ENCODE measurements at regions of chr1 and their contacts with region 1.

Region 1: DNA sequence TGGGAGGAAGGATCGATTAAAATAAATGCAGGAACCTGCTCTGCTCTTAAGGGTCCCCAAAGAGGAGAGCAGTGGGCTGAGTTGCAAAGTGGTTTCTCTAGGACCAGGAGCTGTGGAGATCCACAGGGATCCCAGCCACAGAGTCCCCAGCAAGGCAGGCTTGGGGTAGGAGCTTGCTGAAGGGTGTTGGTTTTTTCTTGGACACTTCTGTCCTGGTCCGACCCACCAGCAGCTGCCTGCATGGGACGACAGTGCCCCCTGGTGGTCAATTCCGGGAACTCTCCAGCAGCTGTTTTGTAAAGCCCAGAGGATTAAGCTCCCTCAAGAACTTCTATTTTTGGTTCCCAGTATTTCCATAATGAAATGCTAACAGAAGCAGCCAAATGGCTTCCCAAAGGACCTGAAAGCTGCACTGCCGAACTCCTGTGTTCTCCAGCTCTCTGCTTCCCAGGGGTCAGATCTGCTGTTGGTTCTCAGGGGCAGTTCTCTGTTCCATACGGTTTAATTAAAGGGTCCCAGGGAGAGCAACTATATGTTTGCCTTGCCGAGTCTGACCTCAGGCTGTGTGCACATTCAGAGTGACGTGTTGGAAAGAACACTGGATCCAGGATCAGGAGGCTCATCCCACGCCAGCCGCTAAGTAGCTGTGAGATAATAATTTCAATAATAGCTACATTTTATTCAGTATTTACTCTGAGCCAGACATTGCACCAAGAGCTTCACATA is 23.2 kb downstream of the NENF start:
- DNase-seq: peak; percentile 58
- ATAC-seq: peak; percentile 87
- H3K4me3 ChIP-seq: no peak overlapping the region
- H3K27ac ChIP-seq: no peak overlapping the region
- H3K4me1 ChIP-seq: peaks cover 12% of the 10 kb centered on the region; the same call in 1 of the 2 replicates
- H3K27me3 ChIP-seq: no peaks in the 10 kb centered on the region
- CTCF ChIP-seq: peak; percentile 91
- EP300 ChIP-seq: no peak
- POLR2A ChIP-seq: no peak
- RAD21 ChIP-seq: peak; percentile 86

Region 2: GRCh38 chr1:211965108-211965805 is 490.7 kb before region 1 on chr1:
- CTCF ChIA-PET with region 1: no interaction called
- POLR2A ChIA-PET with region 1: no interaction called
- in situ Hi-C with region 1: no loop called
- intact Hi-C with region 1: no loop called
- DNase-seq: no peak
- ATAC-seq: no peak
- H3K4me3 ChIP-seq: no peak overlapping the region
- H3K27ac ChIP-seq: no peak overlapping the region
- H3K4me1 ChIP-seq: no peaks in the 10 kb centered on the region
- H3K27me3 ChIP-seq: no peaks in the 10 kb centered on the region
- CTCF ChIP-seq: no peak
- EP300 ChIP-seq: no peak
- POLR2A ChIP-seq: no peak
- RAD21 ChIP-seq: no peak

Region 3: GRCh38 chr1:212062832-212063438 is 393.0 kb before region 1 on chr1:
- CTCF ChIA-PET with region 1: interaction called, 12 read pairs
- POLR2A ChIA-PET with region 1: no interaction called
- in situ Hi-C with region 1: loop called (anchors 5 kb)
- intact Hi-C with region 1: loop called (anchors 2 kb)
- DNase-seq: peak; percentile 47
- ATAC-seq: peak; percentile 74
- H3K4me3 ChIP-seq: no peak overlapping the region
- H3K27ac ChIP-seq: no peak overlapping the region
- H3K4me1 ChIP-seq: no peaks in the 10 kb centered on the region
- H3K27me3 ChIP-seq: no peaks in the 10 kb centered on the region
- CTCF ChIP-seq: peak; percentile 68
- EP300 ChIP-seq: no peak
- POLR2A ChIP-seq: no peak
- RAD21 ChIP-seq: peak; percentile 36; the same call in 1 of the 2 replicates

Region 4: GRCh38 chr1:212070720-212071302 is 385.2 kb before region 1 on chr1:
- CTCF ChIA-PET with region 1: interaction called, 13 read pairs
- POLR2A ChIA-PET with region 1: no interaction called
- in situ Hi-C with region 1: no loop called
- intact Hi-C with region 1: no loop called
- DNase-seq: peak; percentile 35
- ATAC-seq: peak; percentile 69
- H3K4me3 ChIP-seq: no peak overlapping the region
- H3K27ac ChIP-seq: no peak overlapping the region
- H3K4me1 ChIP-seq: no peaks in the 10 kb centered on the region
- H3K27me3 ChIP-seq: no peaks in the 10 kb centered on the region
- CTCF ChIP-seq: peak; percentile 71
- EP300 ChIP-seq: no peak
- POLR2A ChIP-seq: no peak
- RAD21 ChIP-seq: peak; percentile 76

Region 5: DNA sequence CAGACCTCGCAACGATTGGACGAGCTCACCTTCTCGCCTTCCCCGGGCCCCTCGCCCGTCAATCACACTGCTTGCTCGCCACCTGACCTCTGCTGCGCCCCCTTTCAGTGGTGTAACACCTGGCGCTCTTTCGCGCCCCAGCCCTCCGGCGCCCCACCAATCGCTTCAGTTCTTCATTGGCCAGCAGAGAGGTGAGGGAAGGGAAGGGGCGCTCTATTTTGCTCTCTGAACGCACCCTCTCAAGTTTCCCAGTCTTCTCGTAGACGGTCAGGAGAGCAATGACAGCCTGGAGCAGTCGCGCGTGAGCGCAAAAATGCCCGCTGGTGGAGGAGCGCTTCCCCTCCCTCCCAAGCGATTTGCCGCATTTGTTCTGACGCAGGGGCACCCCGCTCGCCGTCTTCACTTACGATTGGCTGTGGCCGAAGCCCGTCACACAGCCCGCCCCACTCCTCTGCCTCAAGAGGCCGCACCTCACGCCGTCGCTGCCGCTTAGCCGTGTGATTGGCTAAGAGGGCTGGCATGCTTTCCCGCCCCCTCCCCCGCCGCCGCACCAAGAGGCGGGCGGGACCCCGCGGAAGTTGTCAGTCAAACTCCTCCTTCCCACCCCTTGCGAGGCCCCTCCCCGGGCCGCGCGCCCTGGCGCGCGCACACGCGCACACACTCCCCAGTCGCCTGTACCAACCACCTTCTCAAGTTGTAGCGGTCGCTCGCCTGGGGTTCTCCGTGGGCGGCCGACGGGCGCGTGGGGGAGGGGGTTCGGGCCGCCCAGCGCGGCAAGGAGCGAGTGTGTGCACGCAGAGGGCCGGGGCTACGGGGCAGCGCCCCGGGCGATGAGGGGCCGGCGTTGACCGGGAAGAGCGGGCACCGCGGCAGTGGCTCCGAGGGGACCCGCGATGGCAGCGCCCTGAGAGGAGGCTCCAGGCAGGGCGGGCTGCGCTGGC is 171.0 kb before region 1 on chr1 and contains the start of gene PPP2R5A:
- CTCF ChIA-PET with region 1: no interaction called
- POLR2A ChIA-PET with region 1: no interaction called
- in situ Hi-C with region 1: no loop called
- intact Hi-C with region 1: loop called (anchors 2 kb)
- DNase-seq: peak; percentile 97
- ATAC-seq: peak; percentile 93
- H3K4me3 ChIP-seq: peak within 1 kb of the TSS; percentile 85 to 98 (median 96)
- H3K27ac ChIP-seq: peak within 1 kb of the TSS; percentile 91
- H3K4me1 ChIP-seq: peaks cover 32% of the 10 kb centered on the region
- H3K27me3 ChIP-seq: no peaks in the 10 kb centered on the region; a peak in 1 of 5 replicates
- CTCF ChIP-seq: peak; percentile 85
- EP300 ChIP-seq: 0 out of 4 replicates have a peak, but pooled peaks of 1 of the 2 experiments have one; percentile 9
- POLR2A ChIP-seq: peak; percentile 71 to 72
- RAD21 ChIP-seq: peak; percentile 66; the same call in 1 of the 2 replicates
- total RNA-seq, gene PPP2R5A: 22.0 and 26.5 TPM in 2 replicates

Region 6: DNA sequence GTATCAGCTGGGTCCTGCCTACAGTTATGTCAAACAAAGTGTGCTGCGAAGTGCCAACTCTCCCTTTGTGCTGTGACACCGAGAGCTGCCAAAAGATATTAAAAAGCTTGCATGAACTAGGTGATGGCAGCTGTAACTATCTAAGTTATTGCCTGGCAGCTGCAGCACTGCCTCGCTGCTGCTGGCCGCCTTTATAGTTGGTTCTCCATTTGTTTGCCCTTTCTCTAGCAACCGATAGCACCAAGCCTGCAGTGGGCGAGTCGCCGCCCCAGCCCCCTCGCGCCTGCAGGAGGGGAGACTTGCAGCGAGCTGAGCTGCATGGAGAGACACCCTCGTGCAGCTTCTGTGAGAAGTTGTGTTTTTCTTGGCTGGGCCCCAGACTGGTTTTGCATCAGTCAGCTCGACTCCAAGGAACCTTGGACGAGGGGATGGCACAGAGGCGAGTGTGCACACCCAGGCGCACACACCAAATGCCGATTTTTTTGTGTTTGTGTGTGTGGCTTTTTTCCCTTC is 925.7 kb after region 1 on chr1:
- CTCF ChIA-PET with region 1: no interaction called
- POLR2A ChIA-PET with region 1: no interaction called
- in situ Hi-C with region 1: no loop called
- intact Hi-C with region 1: no loop called
- DNase-seq: no peak
- ATAC-seq: no peak
- H3K4me3 ChIP-seq: no peak overlapping the region
- H3K27ac ChIP-seq: no peak overlapping the region
- H3K4me1 ChIP-seq: peaks cover 56% of the 10 kb centered on the region
- H3K27me3 ChIP-seq: no peaks in the 10 kb centered on the region
- CTCF ChIP-seq: no peak
- EP300 ChIP-seq: no peak
- POLR2A ChIP-seq: no peak
- RAD21 ChIP-seq: no peak